ENCODE measurements at regions of chr17 and their contacts with region 1.

Region 1: DNA sequence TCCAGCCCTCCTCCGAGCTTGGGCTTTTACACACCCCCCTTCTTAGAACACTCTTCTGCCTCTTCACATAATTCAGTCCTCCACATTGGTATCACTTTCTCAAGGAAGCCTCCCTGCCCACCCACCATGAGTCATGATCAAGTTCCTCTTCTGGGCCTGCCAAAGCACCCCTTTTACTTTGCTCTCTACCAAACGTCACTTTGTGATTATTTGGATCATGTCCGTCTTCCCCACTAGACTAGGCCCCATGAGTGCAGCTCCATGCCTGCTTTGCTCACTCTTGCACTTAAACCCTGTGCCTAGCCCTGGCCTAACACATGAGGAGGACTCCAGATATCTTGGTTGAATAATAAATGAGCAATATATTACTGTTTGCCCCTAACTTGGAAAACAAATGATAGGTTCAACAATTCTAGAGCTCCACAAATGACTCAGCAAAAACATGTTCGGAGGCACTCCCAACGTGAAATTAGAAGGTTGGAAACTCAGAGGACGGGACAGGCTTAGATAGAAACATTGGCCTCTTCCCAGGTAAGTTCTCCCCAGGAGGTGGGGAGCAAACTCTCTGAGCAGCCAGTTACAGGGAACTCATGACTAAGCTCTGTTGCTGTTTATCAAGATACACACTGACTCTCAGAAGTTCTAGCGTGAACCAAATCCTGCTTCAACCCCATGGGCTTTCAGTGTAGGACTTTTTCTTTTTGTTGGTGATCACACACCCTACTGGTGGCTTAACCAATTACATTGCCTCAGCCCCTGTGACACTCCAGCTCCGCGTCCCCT is 28.3 kb downstream of the G6PC1 start:
- DNase-seq: peak; percentile 78
- ATAC-seq: peak; percentile 92
- H3K4me3 ChIP-seq: no peak overlapping the region
- H3K27ac ChIP-seq: peak overlapping the region; percentile 87
- H3K4me1 ChIP-seq: peaks cover 9% of the 10 kb centered on the region
- H3K27me3 ChIP-seq: no peaks in the 10 kb centered on the region
- CTCF ChIP-seq: peak; percentile 66

Region 2: GRCh38 chr17:42843358-42843934 is 85.5 kb before region 1 on chr17:
- CTCF ChIA-PET with region 1: interaction called, 8 read pairs
- POLR2A ChIA-PET with region 1: no interaction called
- intact Hi-C with region 1: loop called (anchors 1 kb)
- DNase-seq: peak; percentile 63
- ATAC-seq: peak; percentile 72
- H3K4me3 ChIP-seq: no peak overlapping the region
- H3K27ac ChIP-seq: no peak overlapping the region
- H3K4me1 ChIP-seq: peaks cover 8% of the 10 kb centered on the region
- H3K27me3 ChIP-seq: no peaks in the 10 kb centered on the region
- CTCF ChIP-seq: peak; percentile 81

Measured in PC-3 (cell line).